ENCODE measurements at regions of chr20 and their contacts with region 1.

Region 1: DNA sequence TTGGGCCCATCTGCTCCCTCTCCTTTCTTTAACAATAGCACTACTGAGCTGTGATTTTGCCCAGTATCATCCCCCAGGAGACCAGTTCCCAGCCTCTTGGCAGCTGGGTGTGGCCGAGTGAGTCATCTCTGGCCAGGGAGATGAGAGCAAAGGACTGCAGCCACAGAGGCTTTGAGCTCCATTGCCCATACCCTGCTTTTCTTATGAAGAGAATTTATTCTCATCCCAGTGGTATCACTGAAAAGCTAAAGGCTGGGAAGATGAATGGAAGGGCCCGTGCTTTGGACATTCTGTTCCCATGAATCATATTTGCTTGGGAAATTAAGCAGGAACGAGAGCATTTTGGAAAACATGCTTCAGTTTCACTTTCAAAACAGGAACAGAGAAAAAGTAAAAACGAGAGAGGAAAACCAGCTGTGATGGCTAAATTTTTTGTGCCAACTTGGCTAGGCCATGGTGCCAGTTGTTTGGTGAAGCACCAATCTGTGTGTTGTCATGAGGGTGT is 14.9 kb downstream of the CST3 start:
- DNase-seq: peak; percentile 80 to 95
- ATAC-seq: peak; percentile 97 to 99
- H3K4me3 ChIP-seq: peak overlapping the region; percentile 31
- H3K27ac ChIP-seq: peak overlapping the region; percentile 74 to 92
- H3K4me1 ChIP-seq: peaks cover 26% of the 10 kb centered on the region
- CTCF ChIP-seq: no peak
- EP300 ChIP-seq: no peak
- POLR2A ChIP-seq: 0 out of 2 replicates have a peak, but pooled peaks have one; percentile 19
- RAD21 ChIP-seq: 0 out of 5 replicates have a peak, but pooled peaks of 1 of the 2 experiments have one; percentile 9

Region 2: GRCh38 chr20:23606652-23607049 is 16.2 kb before region 1 on chr20:
- CTCF ChIA-PET with region 1: interaction called, 17 read pairs
- POLR2A ChIA-PET with region 1: interaction called, 3 read pairs
- DNase-seq: peak; percentile 74 to 91
- ATAC-seq: peak; percentile 86 to 97
- H3K4me3 ChIP-seq: no peak overlapping the region
- H3K27ac ChIP-seq: no peak overlapping the region
- H3K4me1 ChIP-seq: no peaks in the 10 kb centered on the region; the same call in 2 of the 3 replicates
- CTCF ChIP-seq: peak; percentile 84
- EP300 ChIP-seq: no peak
- POLR2A ChIP-seq: no peak
- RAD21 ChIP-seq: peak; percentile 87 to 92

Region 3: GRCh38 chr20:23637282-23638221 is 14.7 kb after region 1 on chr20 and contains the start of gene CST3:
- CTCF ChIA-PET with region 1: interaction called, 6 read pairs
- POLR2A ChIA-PET with region 1: interaction called, 19 read pairs
- DNase-seq: peak; percentile 91 to 97
- ATAC-seq: peak; percentile 85 to 93
- H3K4me3 ChIP-seq: peak within 1 kb of the TSS; percentile 95
- H3K27ac ChIP-seq: peak within 1 kb of the TSS; percentile 94 to 99
- H3K4me1 ChIP-seq: peaks cover 15% of the 10 kb centered on the region
- CTCF ChIP-seq: no peak
- EP300 ChIP-seq: no peak
- POLR2A ChIP-seq: peak; percentile 99
- RAD21 ChIP-seq: no peak
- polyA plus RNA-seq, gene CST3: 136 and 179 TPM in 2 replicates